ENCODE measurements at regions of chr1 and their contacts with region 1.

Region 1: GRCh38 chr1:21782868-21783678 is at the start of gene USP48:
- DNase-seq: peak; percentile 93 to 99 (median 96)
- ATAC-seq: peak; percentile 82
- H3K4me3 ChIP-seq: peak within 1 kb of the TSS; percentile 100
- H3K4me3 Mint-ChIP-seq: peak within 1 kb of the TSS; percentile 99
- H3K27ac ChIP-seq: peak within 1 kb of the TSS; percentile 99 to 100
- H3K27ac Mint-ChIP-seq: peak within 1 kb of the TSS; percentile 100
- H3K4me1 ChIP-seq: peaks cover 38% of the 10 kb centered on the region
- H3K4me1 Mint-ChIP-seq: peaks cover 39% of the 10 kb centered on the region
- H3K27me3 ChIP-seq: no peaks in the 10 kb centered on the region
- H3K27me3 Mint-ChIP-seq: no peaks in the 10 kb centered on the region
- CTCF ChIP-seq: no peak
- total RNA-seq, gene USP48: 73.3 to 76.0 TPM

Region 2: GRCh38 chr1:21659099-21659923 is 123.8 kb before region 1 on chr1:
- CTCF ChIA-PET with region 1: interaction called, 7 read pairs
- POLR2A ChIA-PET with region 1: no interaction called
- intact Hi-C with region 1: loop called (anchors 2 to 5 kb)
- DNase-seq: peak; percentile 64 to 92 (median 77)
- ATAC-seq: peak; percentile 97
- H3K4me3 ChIP-seq: no peak overlapping the region
- H3K4me3 Mint-ChIP-seq: peak overlapping the region; percentile 30
- H3K27ac ChIP-seq: no peak overlapping the region
- H3K27ac Mint-ChIP-seq: no peak overlapping the region
- H3K4me1 ChIP-seq: peaks cover 8% of the 10 kb centered on the region
- H3K4me1 Mint-ChIP-seq: peaks cover 6% of the 10 kb centered on the region
- H3K27me3 ChIP-seq: peaks cover 9 to 17% of the 10 kb centered on the region in 2 experiments
- H3K27me3 Mint-ChIP-seq: peaks cover 35% of the 10 kb centered on the region
- CTCF ChIP-seq: peak; percentile 81

Region 3: DNA sequence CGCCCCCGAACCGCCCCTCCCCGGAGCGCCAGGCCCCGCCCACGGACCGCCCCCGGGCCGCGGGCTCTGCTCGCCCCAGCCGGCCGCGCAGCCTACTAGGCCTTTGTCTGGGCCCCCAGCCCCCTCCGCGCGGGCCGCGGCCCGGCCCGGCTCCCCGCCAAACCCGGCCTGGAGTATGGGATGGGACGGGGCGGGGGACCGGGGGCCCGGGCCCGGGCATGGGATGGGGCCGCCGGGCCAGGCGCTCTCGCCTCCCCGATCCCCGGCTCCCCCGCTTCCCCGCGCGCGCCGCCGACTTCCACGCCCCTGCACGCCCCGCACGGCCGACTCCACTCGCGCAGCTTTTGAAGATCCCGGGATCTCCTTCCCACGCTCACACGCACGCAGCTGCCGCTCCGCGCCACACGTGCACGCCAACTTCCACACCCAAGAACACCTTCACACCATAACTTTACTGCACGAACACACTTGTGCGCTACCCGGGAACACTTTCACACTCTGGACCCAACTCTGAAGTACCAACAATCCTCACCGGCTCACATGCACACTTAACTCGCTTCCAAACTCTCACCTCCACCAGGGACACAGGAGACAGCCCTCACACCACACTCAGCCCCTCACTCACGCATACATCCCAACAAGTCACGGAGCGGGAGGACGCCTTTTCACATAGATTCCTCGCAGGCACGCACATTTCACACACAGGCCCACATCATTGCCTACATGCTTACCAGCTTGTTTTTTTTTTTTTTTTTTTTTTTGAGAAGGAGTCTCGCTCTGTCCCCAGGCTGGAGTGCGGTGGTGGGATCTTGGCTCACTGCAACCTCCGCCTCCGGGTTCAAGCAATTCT is 154.5 kb after region 1 on chr1:
- CTCF ChIA-PET with region 1: no interaction called
- POLR2A ChIA-PET with region 1: no interaction called
- intact Hi-C with region 1: loop called in 1 of 2 experiments (anchors 5 kb)
- DNase-seq: peak; percentile 35 to 84 (median 64)
- ATAC-seq: peak; percentile 82
- H3K4me3 ChIP-seq: peak overlapping the region; percentile 55
- H3K4me3 Mint-ChIP-seq: peak overlapping the region; percentile 90
- H3K27ac ChIP-seq: no peak overlapping the region
- H3K27ac Mint-ChIP-seq: peak overlapping the region; percentile 48
- H3K4me1 ChIP-seq: peaks cover 25% of the 10 kb centered on the region
- H3K4me1 Mint-ChIP-seq: peaks cover 27% of the 10 kb centered on the region
- H3K27me3 ChIP-seq: no peaks in the 10 kb centered on the region
- H3K27me3 Mint-ChIP-seq: no peaks in the 10 kb centered on the region
- CTCF ChIP-seq: no peak

Region 4: GRCh38 chr1:21963477-21964217 is 180.6 kb after region 1 on chr1:
- CTCF ChIA-PET with region 1: no interaction called
- POLR2A ChIA-PET with region 1: interaction called, 12 read pairs
- intact Hi-C with region 1: loop called in 1 of 2 experiments (anchors 2 kb)
- DNase-seq: peak; percentile 70 to 90 (median 82)
- ATAC-seq: peak; percentile 98
- H3K4me3 ChIP-seq: no peak overlapping the region
- H3K4me3 Mint-ChIP-seq: no peak overlapping the region
- H3K27ac ChIP-seq: no peak overlapping the region
- H3K27ac Mint-ChIP-seq: peak overlapping the region; percentile 25
- H3K4me1 ChIP-seq: peaks cover 10% of the 10 kb centered on the region
- H3K4me1 Mint-ChIP-seq: peaks cover 21% of the 10 kb centered on the region
- H3K27me3 ChIP-seq: no peaks in the 10 kb centered on the region
- H3K27me3 Mint-ChIP-seq: peaks cover 2% of the 10 kb centered on the region
- CTCF ChIP-seq: peak; percentile 96

Region 5: GRCh38 chr1:22451702-22452474 is 668.8 kb after region 1 on chr1 and contains the start of gene ZBTB40:
- CTCF ChIA-PET with region 1: no interaction called
- POLR2A ChIA-PET with region 1: no interaction called
- intact Hi-C with region 1: loop called (anchors 5 kb)
- DNase-seq: peak; percentile 88 to 98 (median 92)
- ATAC-seq: peak; percentile 90
- H3K4me3 ChIP-seq: peak within 1 kb of the TSS; percentile 94
- H3K4me3 Mint-ChIP-seq: peak within 1 kb of the TSS; percentile 91
- H3K27ac ChIP-seq: peak within 1 kb of the TSS; percentile 88 to 89
- H3K27ac Mint-ChIP-seq: peak within 1 kb of the TSS; percentile 85
- H3K4me1 ChIP-seq: peaks cover 11% of the 10 kb centered on the region
- H3K4me1 Mint-ChIP-seq: peaks cover 45% of the 10 kb centered on the region
- H3K27me3 ChIP-seq: no peaks in the 10 kb centered on the region
- H3K27me3 Mint-ChIP-seq: no peaks in the 10 kb centered on the region
- CTCF ChIP-seq: no peak
- total RNA-seq, gene ZBTB40: 28.4 to 30.6 TPM

Measured in CD4-positive, alpha-beta T cell (primary cell).